PC-3 (cell line): ENCODE measurements at regions of chr5 and their contacts with region 1.

Region 1: GRCh38 chr5:126615286-126615685 is 14.5 kb downstream of the PHAX start:
- DNase-seq: no peak
- ATAC-seq: no peak
- H3K4me3 ChIP-seq: no peak overlapping the region
- H3K27ac ChIP-seq: no peak overlapping the region
- H3K4me1 ChIP-seq: no peaks in the 10 kb centered on the region
- H3K27me3 ChIP-seq: no peaks in the 10 kb centered on the region
- CTCF ChIP-seq: no peak

Region 2: GRCh38 chr5:126531543-126532120 is 83.7 kb before region 1 on chr5:
- CTCF ChIA-PET with region 1: no interaction called
- POLR2A ChIA-PET with region 1: interaction called, 14 read pairs
- intact Hi-C with region 1: no loop called
- DNase-seq: no peak
- ATAC-seq: no peak; the same call in 1 of the 2 replicates
- H3K4me3 ChIP-seq: no peak overlapping the region
- H3K27ac ChIP-seq: no peak overlapping the region
- H3K4me1 ChIP-seq: no peaks in the 10 kb centered on the region
- H3K27me3 ChIP-seq: no peaks in the 10 kb centered on the region
- CTCF ChIP-seq: no peak

Region 3: DNA sequence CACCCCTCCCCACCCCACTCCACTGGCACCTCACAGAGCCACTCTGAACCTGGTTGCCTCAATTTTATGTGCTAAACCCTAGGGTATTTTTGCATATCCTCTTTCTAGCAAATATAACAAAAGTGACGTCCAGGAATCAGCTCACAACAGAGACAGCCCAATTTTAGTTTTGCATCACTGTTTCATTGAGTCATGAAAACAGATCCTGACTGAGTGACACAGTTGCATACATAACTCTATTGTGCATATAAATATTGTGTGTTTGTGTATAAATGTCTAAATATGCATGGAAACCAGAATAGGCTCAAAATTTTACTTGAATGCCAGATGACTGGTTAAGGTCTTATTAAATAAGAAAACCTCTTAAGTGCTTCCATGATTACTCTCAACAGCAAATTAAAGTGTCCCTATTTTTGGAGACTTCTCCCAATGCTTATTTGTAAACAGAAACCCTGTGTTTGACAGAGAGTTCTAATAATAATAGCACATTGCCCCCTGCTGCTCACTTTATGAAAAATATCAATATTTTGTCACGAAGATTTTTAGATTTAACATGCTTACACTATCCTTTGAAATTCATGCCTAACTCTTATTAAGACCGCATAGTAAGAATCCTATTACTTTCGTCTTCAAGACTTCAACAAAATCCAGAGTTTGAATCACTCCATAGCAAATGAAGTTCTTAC is 826.7 kb after region 1 on chr5:
- CTCF ChIA-PET with region 1: no interaction called
- POLR2A ChIA-PET with region 1: no interaction called
- intact Hi-C with region 1: no loop called
- DNase-seq: peak; percentile 42
- ATAC-seq: no peak
- H3K4me3 ChIP-seq: no peak overlapping the region
- H3K27ac ChIP-seq: no peak overlapping the region
- H3K4me1 ChIP-seq: no peaks in the 10 kb centered on the region
- H3K27me3 ChIP-seq: peaks cover 72% of the 10 kb centered on the region
- CTCF ChIP-seq: peak; percentile 58